ENCODE measurements at regions of chr16 and their contacts with region 1.

Region 1: GRCh38 chr16:84478172-84478947 is 26.1 kb downstream of the MEAK7 start:
- DNase-seq: no peak
- H3K4me3 ChIP-seq: no peak overlapping the region
- H3K27ac ChIP-seq: no peak overlapping the region
- H3K4me1 ChIP-seq: peaks cover 18% of the 10 kb centered on the region
- H3K27me3 ChIP-seq: no peaks in the 10 kb centered on the region
- CTCF ChIP-seq: no peak

Region 2: DNA sequence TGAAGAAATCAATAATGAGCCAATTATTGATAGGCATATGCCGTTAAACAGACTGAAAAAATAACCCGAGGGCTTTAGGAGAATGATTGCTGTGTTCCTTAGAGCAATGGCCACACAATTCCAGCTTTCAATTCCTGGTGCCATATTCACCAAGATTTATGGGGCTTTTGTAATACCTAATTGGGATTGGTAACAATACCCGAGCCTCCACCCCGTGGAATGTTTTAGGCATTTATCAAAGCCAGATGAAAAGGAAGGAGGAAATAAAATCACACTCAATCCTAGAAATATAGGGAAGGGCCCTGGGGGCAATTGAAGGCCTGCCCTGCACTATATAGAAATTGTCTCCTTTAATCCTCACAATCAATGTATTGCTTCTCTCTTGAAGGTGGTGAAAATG is 621.6 kb before region 1 on chr16:
- CTCF ChIA-PET with region 1: no interaction called
- POLR2A ChIA-PET with region 1: no interaction called
- intact Hi-C with region 1: no loop called
- DNase-seq: no peak
- H3K4me3 ChIP-seq: no peak overlapping the region
- H3K27ac ChIP-seq: no peak overlapping the region
- H3K4me1 ChIP-seq: no peaks in the 10 kb centered on the region
- H3K27me3 ChIP-seq: peaks cover 97% of the 10 kb centered on the region
- CTCF ChIP-seq: no peak

Region 3: GRCh38 chr16:84277237-84277823 is 201.0 kb before region 1 on chr16:
- CTCF ChIA-PET with region 1: no interaction called
- POLR2A ChIA-PET with region 1: no interaction called
- intact Hi-C with region 1: loop called (anchors 5 kb)
- DNase-seq: peak in 1 of 2 experiments; percentile 46
- H3K4me3 ChIP-seq: no peak overlapping the region
- H3K27ac ChIP-seq: no peak overlapping the region
- H3K4me1 ChIP-seq: no peaks in the 10 kb centered on the region
- H3K27me3 ChIP-seq: no peaks in the 10 kb centered on the region
- CTCF ChIP-seq: peak; percentile 93

Region 4: GRCh38 chr16:84453061-84453752 is 25.2 kb before region 1 on chr16:
- CTCF ChIA-PET with region 1: no interaction called
- POLR2A ChIA-PET with region 1: no interaction called
- intact Hi-C with region 1: no loop called
- DNase-seq: no peak
- H3K4me3 ChIP-seq: no peak overlapping the region
- H3K27ac ChIP-seq: no peak overlapping the region
- H3K4me1 ChIP-seq: no peaks in the 10 kb centered on the region
- H3K27me3 ChIP-seq: no peaks in the 10 kb centered on the region
- CTCF ChIP-seq: no peak

Measured in PC-9 (cell line).